MCF 10A (cell line): ENCODE measurements at regions of chr6 and their contacts with region 1.

Region 1: GRCh38 chr6:42453031-42453653 is 1.4 kb upstream of the TRERF1 start:
- DNase-seq: peak; percentile 87
- H3K4me3 Mint-ChIP-seq: peak overlapping the region; percentile 91
- H3K27ac Mint-ChIP-seq: no peak overlapping the region
- H3K4me1 Mint-ChIP-seq: peaks cover 32% of the 10 kb centered on the region
- H3K27me3 Mint-ChIP-seq: no peaks in the 10 kb centered on the region
- CTCF ChIP-seq: no peak

Region 2: DNA sequence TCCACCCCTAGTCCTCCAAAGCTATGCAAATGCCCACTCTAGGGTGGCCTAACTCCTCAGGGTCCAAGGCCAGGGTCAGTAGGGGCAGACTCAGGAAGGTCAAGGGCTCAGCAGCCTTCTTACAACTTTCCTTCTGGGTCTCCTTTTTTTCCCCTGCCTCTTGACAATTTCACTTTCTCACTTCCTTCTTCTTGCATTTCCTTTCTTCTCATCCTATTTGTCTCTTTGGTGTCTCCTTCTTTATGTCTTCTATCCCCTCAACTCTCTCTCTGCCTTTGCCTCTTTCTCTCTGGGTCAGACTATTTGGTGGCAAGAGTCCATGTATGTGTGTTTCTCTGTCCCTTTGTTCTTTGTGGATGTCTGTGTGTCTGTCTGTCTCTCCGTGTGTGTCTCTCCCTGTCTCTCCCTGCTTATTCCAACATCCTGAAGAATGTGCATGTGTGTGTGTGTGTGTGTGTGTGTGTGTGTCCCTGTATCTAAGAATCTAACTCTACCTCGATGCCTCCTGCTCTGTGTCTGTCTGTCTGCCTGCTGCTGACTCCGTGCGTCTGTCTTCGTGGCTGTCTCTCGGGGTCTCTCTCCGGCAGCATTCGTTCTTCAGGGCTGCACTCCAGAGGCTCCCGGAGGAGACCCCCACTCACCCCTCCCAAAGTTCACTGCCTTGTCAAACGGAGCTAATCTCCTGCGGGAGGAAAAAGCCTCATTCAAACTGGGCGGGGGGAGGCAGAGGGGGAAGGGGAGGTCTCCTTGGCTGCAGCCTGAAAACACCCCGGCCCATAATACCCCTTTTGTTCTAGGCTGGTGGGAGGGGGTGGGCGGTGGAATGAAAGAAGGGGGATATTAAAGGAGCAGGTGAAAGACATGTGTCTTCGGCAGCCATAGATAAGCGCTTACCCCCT is 958.7 kb before region 1 on chr6:
- CTCF ChIA-PET with region 1: no interaction called
- POLR2A ChIA-PET with region 1: no interaction called
- intact Hi-C with region 1: no loop called
- DNase-seq: no peak
- H3K4me3 Mint-ChIP-seq: no peak overlapping the region
- H3K27ac Mint-ChIP-seq: no peak overlapping the region
- H3K4me1 Mint-ChIP-seq: peaks cover 1% of the 10 kb centered on the region
- H3K27me3 Mint-ChIP-seq: peaks cover 50% of the 10 kb centered on the region
- CTCF ChIP-seq: no peak

Region 3: DNA sequence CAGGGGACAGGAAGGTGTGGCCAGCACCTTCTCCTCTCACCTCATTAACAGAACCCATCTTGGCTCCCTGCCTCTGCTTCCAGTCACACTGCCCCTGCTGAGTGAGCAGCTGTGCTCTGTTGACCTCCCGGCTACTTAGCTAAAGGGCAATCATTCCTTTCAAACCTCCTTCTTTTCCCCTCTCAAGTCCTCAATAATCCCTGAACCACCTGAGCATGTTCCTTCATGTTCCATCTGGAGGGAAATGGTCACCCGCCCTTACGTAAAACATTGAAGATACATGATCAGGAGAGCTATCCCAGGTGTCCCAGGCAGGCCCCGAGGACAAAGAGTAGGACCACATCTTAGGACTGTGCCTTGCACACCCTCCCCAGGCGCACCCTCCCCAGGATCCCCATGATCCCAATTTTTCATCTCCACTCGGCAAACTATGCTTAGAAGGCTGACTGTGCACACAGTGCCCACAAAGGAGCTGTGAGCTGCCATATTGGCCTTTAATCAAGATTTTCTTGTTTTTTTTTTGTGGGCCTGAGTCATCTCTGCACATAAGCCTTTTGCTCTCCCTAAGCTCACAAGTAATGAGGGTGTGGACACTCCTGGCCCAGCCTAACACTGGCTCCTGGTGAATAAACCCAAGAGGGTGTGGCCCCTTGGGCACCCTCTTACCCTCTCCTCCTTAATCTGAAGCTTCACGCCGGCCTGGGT is 213.6 kb before region 1 on chr6:
- CTCF ChIA-PET with region 1: no interaction called
- POLR2A ChIA-PET with region 1: interaction called, 6 read pairs
- intact Hi-C with region 1: loop called (anchors 5 kb)
- DNase-seq: peak; percentile 85
- H3K4me3 Mint-ChIP-seq: peak overlapping the region; percentile 24
- H3K27ac Mint-ChIP-seq: peak overlapping the region; percentile 89
- H3K4me1 Mint-ChIP-seq: peaks cover 23% of the 10 kb centered on the region
- H3K27me3 Mint-ChIP-seq: no peaks in the 10 kb centered on the region
- CTCF ChIP-seq: no peak

Region 4: DNA sequence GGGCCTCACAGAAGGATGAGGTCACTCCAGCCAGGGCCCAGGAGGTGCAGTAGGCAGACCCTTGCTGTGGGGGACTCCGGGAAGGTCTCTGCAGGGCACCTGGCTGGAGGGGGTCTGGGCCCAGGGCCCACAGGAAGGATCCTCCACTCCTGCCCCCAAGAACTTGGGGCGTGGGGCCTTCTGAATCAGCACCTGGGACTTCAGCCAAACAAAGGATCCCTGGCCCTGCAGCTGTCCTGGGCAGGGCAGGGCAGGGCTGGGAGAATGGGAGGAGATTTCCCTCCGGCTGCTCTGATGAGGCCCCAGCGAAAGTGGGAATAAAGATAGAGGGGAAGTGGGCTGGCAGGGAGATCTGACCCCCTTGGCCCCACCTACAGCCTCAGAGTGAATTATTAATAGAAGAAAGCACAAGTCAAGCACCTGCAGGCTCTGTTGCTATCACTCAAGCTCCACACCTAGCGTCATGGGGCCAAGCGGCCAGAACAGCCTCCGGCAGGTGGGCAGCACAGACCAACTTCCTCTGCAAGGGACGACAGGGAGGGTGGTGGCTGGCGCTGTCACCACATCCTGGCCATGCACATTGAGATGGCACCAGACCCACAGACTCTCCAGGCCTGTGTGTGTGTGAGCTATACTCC is 173.9 kb before region 1 on chr6:
- CTCF ChIA-PET with region 1: no interaction called
- POLR2A ChIA-PET with region 1: interaction called, 6 read pairs
- intact Hi-C with region 1: loop called (anchors 5 kb)
- DNase-seq: peak; percentile 90
- H3K4me3 Mint-ChIP-seq: peak overlapping the region; percentile 52
- H3K27ac Mint-ChIP-seq: peak overlapping the region; percentile 70
- H3K4me1 Mint-ChIP-seq: peaks cover 34% of the 10 kb centered on the region
- H3K27me3 Mint-ChIP-seq: no peaks in the 10 kb centered on the region
- CTCF ChIP-seq: no peak

Region 5: GRCh38 chr6:42532038-42532669 is 79.0 kb after region 1 on chr6:
- CTCF ChIA-PET with region 1: interaction called, 14 read pairs
- POLR2A ChIA-PET with region 1: interaction called, 6 read pairs
- intact Hi-C with region 1: loop called (anchors 1 kb)
- DNase-seq: peak; percentile 74
- H3K4me3 Mint-ChIP-seq: no peak overlapping the region
- H3K27ac Mint-ChIP-seq: no peak overlapping the region
- H3K4me1 Mint-ChIP-seq: no peaks in the 10 kb centered on the region
- H3K27me3 Mint-ChIP-seq: no peaks in the 10 kb centered on the region
- CTCF ChIP-seq: peak; percentile 79

Region 6: DNA sequence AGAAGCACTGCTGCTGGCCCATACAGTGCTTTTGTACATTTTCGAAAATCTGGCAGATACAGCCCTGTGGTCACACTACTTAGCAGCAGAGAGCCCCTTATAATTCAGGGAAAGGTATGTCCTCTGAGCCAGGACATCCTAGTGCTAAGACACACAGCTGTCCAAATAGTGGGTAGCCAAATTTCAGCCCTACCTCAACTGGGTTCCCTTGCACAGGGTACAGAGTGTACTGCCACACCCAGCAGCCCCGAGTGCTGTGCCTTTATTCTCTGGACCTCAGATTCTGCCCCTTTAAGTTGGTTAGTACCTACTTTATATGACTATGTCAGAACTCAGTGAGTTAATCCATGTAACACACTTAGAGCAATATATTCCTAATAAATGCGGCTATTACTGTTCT is 221.6 kb after region 1 on chr6:
- CTCF ChIA-PET with region 1: no interaction called
- POLR2A ChIA-PET with region 1: no interaction called
- intact Hi-C with region 1: no loop called
- DNase-seq: no peak
- H3K4me3 Mint-ChIP-seq: no peak overlapping the region
- H3K27ac Mint-ChIP-seq: no peak overlapping the region
- H3K4me1 Mint-ChIP-seq: peaks cover 14% of the 10 kb centered on the region
- H3K27me3 Mint-ChIP-seq: no peaks in the 10 kb centered on the region
- CTCF ChIP-seq: no peak

Region 7: DNA sequence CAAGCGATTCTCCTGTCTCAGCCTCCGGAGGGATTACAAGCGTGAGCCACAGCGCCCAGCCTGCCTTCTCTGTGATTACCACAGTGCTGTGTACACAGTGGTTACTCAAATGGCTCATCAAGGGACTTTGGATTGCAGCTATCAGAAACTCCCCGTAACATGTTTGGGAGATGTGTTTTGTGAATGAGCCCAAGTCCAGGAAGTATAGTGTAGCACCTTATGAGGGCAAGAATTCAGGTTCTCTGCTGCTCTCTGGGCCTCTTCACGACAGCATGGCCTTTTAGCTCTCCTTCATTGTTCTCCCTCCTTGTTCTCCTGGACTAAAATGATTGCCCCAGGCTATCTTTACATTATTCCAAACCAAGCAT is 392.2 kb after region 1 on chr6:
- CTCF ChIA-PET with region 1: no interaction called
- POLR2A ChIA-PET with region 1: no interaction called
- intact Hi-C with region 1: no loop called
- DNase-seq: no peak
- H3K4me3 Mint-ChIP-seq: no peak overlapping the region
- H3K27ac Mint-ChIP-seq: no peak overlapping the region
- H3K4me1 Mint-ChIP-seq: no peaks in the 10 kb centered on the region
- H3K27me3 Mint-ChIP-seq: no peaks in the 10 kb centered on the region
- CTCF ChIP-seq: no peak